ENCODE measurements at regions of chr2 and their contacts with region 1.

Region 1: GRCh38 chr2:65554765-65555591 is 122.6 kb upstream of the SPRED2 start:
- DNase-seq: peak; percentile 78
- H3K4me3 ChIP-seq: no peak overlapping the region
- H3K27ac ChIP-seq: peak overlapping the region; percentile 23
- H3K4me1 ChIP-seq: peaks cover 37% of the 10 kb centered on the region
- CTCF ChIP-seq: no peak

Region 2: DNA sequence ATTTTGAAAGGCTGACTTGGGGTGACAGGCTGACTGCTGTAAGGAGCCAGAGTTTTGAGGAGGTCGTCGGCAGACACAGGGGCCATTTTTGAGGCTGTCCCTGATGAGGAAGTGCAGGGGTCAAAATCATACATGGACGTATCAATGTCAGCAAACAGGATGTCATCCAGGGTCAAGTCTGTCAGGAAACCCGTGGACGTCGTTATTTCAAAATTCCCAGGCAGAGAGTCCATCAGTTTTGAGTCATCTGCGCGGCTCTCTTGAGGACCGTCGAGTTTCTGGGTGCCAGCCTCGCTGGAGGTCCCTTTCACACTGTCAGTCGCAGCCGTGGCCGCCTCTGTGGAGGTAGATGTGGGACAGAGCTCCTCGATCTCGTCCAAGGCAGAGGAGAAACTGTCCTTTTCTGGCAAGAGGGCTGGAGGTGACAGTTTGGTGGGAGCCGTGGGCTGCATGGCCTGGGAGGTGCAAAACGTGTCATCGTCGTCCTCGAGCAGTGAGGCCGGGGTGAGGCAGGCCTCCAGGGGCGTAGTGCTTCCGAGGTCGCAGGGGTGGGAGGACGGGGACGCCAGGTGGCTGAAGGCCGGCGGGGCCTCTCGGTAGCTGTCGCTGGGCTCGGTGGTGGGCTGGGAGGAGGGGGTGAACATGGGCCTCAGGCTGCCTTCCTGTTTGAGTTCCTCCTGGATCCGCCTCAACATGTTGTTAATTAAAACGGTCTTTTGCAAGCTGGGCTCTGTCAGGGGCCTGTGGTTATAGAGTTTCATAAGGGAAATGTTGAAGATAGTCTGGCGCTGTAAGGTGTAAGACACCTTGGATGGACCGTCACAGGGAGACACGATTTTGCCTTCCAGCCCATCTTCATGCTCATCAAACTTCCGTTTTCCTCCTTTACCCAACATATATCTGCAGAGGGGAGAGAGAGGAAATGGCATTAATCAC is 918.7 kb before region 1 on chr2:
- CTCF ChIA-PET with region 1: no interaction called
- POLR2A ChIA-PET with region 1: no interaction called
- intact Hi-C with region 1: no loop called
- DNase-seq: peak; percentile 75
- H3K4me3 ChIP-seq: peak overlapping the region; percentile 52
- H3K27ac ChIP-seq: peak overlapping the region; percentile 88
- H3K4me1 ChIP-seq: peaks cover 63% of the 10 kb centered on the region
- CTCF ChIP-seq: no peak

Region 3: DNA sequence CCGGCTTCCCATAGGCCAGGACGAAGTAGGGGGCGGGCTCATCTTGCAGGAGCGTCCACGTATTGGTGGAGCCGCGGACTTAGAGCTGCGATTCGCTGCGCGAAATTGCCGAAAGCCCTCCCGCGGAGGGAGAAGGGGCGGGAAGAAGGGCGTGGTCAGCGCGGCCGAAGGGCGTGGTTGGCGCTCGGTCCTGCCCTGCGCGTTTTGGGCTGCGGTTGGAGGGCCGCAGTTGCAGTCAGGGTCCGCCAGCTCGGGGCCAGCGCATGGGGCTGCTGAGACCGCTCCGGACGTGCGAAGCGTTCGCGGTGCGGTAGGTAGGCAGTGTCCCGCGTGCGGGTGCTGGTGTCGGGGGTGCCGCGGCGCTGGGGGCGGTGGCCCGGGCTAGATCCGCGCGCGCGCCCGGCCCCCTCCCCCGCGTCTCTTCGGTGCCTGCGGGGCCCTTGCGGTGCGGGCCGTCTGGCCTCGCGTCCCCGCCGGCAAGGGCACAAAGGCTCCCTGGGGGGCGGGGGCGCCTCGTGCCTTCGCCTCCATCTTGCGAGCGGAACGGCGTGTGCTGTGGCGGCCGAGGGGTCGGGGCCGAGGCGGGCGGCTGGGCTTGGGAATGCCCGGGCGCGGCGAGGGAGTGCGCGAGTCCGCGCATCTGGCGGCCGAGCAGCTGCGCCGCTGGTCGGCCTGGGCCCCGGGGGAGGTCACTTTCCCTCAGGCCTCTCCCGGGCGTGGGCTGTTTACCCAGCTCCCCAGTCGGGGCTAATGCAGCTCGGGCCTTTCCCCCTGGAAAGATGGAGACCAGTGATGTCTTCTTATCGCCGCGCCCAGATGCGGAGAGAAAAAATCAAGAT is 498.5 kb before region 1 on chr2 and contains the start of gene CEP68:
- CTCF ChIA-PET with region 1: no interaction called
- POLR2A ChIA-PET with region 1: no interaction called
- intact Hi-C with region 1: loop called (anchors 5 kb)
- DNase-seq: peak; percentile 99
- H3K4me3 ChIP-seq: peak within 1 kb of the TSS; percentile 82
- H3K27ac ChIP-seq: peak within 1 kb of the TSS; percentile 56
- H3K4me1 ChIP-seq: peaks cover 68% of the 10 kb centered on the region
- CTCF ChIP-seq: no peak
- total RNA-seq, gene CEP68: 7.3 and 8.7 TPM in 2 replicates

Region 4: GRCh38 chr2:65264821-65265670 is 289.9 kb before region 1 on chr2:
- CTCF ChIA-PET with region 1: no interaction called
- POLR2A ChIA-PET with region 1: no interaction called
- intact Hi-C with region 1: loop called (anchors 1 kb)
- DNase-seq: peak; percentile 76
- H3K4me3 ChIP-seq: no peak overlapping the region
- H3K27ac ChIP-seq: no peak overlapping the region
- H3K4me1 ChIP-seq: peaks cover 9% of the 10 kb centered on the region
- CTCF ChIP-seq: peak; percentile 98

Region 5: DNA sequence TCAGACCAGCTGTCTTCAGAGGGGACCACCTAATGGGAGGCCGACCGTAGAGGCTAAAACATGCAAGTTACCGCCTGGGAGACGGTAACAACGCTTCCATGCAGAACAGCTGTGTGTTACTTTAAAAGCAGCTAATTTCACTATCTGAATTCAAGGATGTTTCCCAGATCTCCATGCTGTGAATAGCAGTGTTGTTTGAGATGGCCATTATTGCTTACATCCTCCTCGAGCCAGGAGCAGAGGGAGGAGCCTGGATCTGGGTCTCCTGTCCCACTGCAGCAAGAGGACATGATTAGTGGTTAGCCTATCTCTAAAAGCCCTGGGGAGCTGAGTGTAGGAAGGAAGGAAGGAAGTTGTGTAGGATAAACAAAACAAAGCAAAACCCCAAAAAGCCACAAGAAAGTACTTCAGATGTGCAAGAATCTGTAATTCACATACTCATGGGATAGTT is 276.4 kb before region 1 on chr2:
- CTCF ChIA-PET with region 1: no interaction called
- POLR2A ChIA-PET with region 1: no interaction called
- intact Hi-C with region 1: loop called (anchors 5 kb)
- DNase-seq: no peak
- H3K4me3 ChIP-seq: no peak overlapping the region
- H3K27ac ChIP-seq: no peak overlapping the region
- H3K4me1 ChIP-seq: peaks cover 17% of the 10 kb centered on the region
- CTCF ChIP-seq: no peak

Region 6: GRCh38 chr2:65300761-65301711 is 253.9 kb before region 1 on chr2:
- CTCF ChIA-PET with region 1: interaction called, 3 read pairs
- POLR2A ChIA-PET with region 1: no interaction called
- intact Hi-C with region 1: loop called (anchors 5 kb)
- DNase-seq: peak; percentile 89
- H3K4me3 ChIP-seq: peak overlapping the region; percentile 44
- H3K27ac ChIP-seq: peak overlapping the region; percentile 86
- H3K4me1 ChIP-seq: peaks cover 50% of the 10 kb centered on the region
- CTCF ChIP-seq: 0 out of 2 replicates have a peak, but pooled peaks have one; percentile 31

Region 7: GRCh38 chr2:65382776-65383357 is 172.1 kb before region 1 on chr2:
- CTCF ChIA-PET with region 1: no interaction called
- POLR2A ChIA-PET with region 1: interaction called, 6 read pairs
- intact Hi-C with region 1: loop called (anchors 5 kb)
- DNase-seq: peak; percentile 85
- H3K4me3 ChIP-seq: peak overlapping the region; percentile 51
- H3K27ac ChIP-seq: peak overlapping the region; percentile 89
- H3K4me1 ChIP-seq: peaks cover 87% of the 10 kb centered on the region
- CTCF ChIP-seq: peak; percentile 82